ENCODE measurements at regions of chr10 and their contacts with region 1.

Region 1: GRCh38 chr10:14959276-14960057 is at the start of gene MEIG1:
- DNase-seq: peak; percentile 93 to 94
- ATAC-seq: peak; percentile 97 to 99 (median 98)
- H3K4me3 ChIP-seq: peak within 1 kb of the TSS; percentile 57 to 96 (median 76)
- H3K27ac ChIP-seq: peak within 1 kb of the TSS; percentile 81 to 98 (median 94)
- H3K4me1 ChIP-seq: peaks cover 0 to 16% (median 6%) of the 10 kb centered on the region in 9 donors
- H3K27me3 ChIP-seq: no peaks in the 10 kb centered on the region
- CTCF ChIP-seq: no peak
- total RNA-seq, gene MEIG1: 0.53 TPM in 1 of 10 donors, not detected in the others

Region 2: GRCh38 chr10:14878266-14879054 is 81.0 kb before region 1 on chr10 and contains the start of gene SUV39H2:
- intact Hi-C with region 1: loop called in 4 of 10 experiments (anchors 2 to 10 kb)
- DNase-seq: peak; percentile 94 to 97
- ATAC-seq: peak; percentile 94 to 99 (median 96)
- H3K4me3 ChIP-seq: peak within 1 kb of the TSS; percentile 68 to 96 (median 85)
- H3K27ac ChIP-seq: peak within 1 kb of the TSS; percentile 82 to 99 (median 96)
- H3K4me1 ChIP-seq: peaks cover 0 to 45% (median 30%) of the 10 kb centered on the region in 9 donors
- H3K27me3 ChIP-seq: no peaks in the 10 kb centered on the region
- CTCF ChIP-seq: peak in 3 of 9 donors; percentile 20 to 40 (median 37)
- total RNA-seq, gene SUV39H2: 4.3 to 9.1 (median 7.4) TPM

Region 3: DNA sequence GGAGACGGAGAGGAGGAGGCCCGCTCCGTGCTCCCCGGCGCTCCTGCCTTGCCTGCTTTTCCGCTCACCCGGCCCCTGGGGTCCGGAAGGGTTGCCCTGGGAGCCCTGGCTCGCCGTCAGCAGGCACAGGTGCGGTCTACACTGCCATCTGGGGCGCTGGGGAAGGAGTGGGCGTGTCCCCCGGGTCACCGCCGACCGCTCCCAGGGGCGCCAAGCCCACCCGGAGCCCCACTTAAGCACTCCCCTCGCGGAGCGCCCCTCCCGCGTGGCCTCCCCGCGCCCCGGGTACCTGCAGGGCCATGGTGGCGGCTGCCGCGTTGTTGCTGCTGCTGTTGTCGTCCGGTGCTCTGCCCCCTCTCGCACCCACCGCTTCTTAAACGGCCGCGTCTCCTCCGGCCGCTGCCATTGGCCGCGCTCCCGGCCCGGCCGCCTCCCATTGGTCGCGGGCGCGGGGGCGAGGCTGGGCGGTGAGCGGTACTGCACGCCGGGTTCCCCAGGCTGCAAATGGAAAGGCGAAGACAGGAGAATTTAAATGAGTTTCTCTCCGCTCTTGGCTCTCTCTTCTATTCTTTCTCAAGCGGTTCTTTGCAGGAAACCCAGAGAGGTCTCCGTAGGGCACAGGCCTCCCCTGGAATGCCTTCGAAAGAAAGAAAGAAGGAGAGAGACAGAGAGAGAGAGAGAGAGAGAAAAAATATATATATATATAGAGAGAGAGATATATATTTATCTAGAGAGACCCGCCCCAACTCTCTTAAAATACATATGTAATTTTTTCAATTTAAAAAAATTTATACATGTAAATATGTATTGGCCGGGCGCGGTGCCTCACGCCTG is 129.2 kb after region 1 on chr10 and contains the start of gene ACBD7:
- intact Hi-C with region 1: loop called in 2 of 10 experiments (anchors 10 kb)
- DNase-seq: peak; percentile 57 to 80
- ATAC-seq: peak; percentile 92 to 99 (median 94)
- H3K4me3 ChIP-seq: peak within 1 kb of the TSS; percentile 51 to 69 (median 60)
- H3K27ac ChIP-seq: no peak within 1 kb of the TSS
- H3K4me1 ChIP-seq: peaks cover 0 to 20% (median 16%) of the 10 kb centered on the region in 9 donors
- H3K27me3 ChIP-seq: peaks cover 0 to 7% (median 0%) of the 10 kb centered on the region in 7 donors
- CTCF ChIP-seq: peak; percentile 23 to 68 (median 51)
- total RNA-seq, gene ACBD7: 0.23 TPM in 1 of 10 donors, not detected in the others

Region 4: GRCh38 chr10:15168781-15169554 is 209.5 kb after region 1 on chr10:
- intact Hi-C with region 1: loop called in 1 of 10 experiments (anchors 1 kb)
- DNase-seq: peak; percentile 97 to 98
- ATAC-seq: peak; percentile 87 to 94 (median 93)
- H3K4me3 ChIP-seq: peak overlapping the region in 6 of 10 donors; percentile 22 to 46 (median 35)
- H3K27ac ChIP-seq: peak overlapping the region in 9 of 10 donors; percentile 14 to 82 (median 65)
- H3K4me1 ChIP-seq: peaks cover 7 to 40% (median 34%) of the 10 kb centered on the region in 9 donors
- H3K27me3 ChIP-seq: peaks cover 0 to 15% (median 0%) of the 10 kb centered on the region in 7 donors
- CTCF ChIP-seq: no peak